Natural killer cell (primary cell): ENCODE measurements at regions of chr13 and their contacts with region 1.

Region 1: DNA sequence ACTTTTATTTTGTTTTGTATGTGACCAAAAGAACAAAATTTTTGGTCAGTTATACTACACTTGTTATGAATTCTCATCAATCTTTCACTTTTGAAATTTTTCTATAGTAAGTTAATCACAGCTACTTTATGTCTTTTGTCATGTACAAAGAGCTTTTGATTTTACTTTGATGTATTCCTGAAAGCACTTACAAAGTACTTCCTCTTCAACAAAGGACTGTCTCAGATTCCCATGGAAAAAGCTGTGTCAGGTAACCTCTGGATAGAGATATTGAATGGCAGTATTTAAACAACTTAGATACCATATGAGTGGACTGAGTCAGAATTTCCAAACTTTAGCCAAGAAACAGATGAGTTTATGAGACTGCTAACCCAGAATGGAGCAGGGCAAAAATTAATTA is 689.3 kb upstream of the ATXN8OS start:
- DNase-seq: no peak
- ATAC-seq: no peak
- H3K4me3 ChIP-seq: no peak overlapping the region
- H3K4me3 Mint-ChIP-seq: no peak overlapping the region
- H3K27ac ChIP-seq: no peak overlapping the region
- H3K27ac Mint-ChIP-seq: no peak overlapping the region
- H3K4me1 ChIP-seq: no peaks in the 10 kb centered on the region
- H3K4me1 Mint-ChIP-seq: no peaks in the 10 kb centered on the region
- H3K27me3 ChIP-seq: no peaks in the 10 kb centered on the region
- H3K27me3 Mint-ChIP-seq: no peaks in the 10 kb centered on the region
- CTCF ChIP-seq: no peak

Region 2: DNA sequence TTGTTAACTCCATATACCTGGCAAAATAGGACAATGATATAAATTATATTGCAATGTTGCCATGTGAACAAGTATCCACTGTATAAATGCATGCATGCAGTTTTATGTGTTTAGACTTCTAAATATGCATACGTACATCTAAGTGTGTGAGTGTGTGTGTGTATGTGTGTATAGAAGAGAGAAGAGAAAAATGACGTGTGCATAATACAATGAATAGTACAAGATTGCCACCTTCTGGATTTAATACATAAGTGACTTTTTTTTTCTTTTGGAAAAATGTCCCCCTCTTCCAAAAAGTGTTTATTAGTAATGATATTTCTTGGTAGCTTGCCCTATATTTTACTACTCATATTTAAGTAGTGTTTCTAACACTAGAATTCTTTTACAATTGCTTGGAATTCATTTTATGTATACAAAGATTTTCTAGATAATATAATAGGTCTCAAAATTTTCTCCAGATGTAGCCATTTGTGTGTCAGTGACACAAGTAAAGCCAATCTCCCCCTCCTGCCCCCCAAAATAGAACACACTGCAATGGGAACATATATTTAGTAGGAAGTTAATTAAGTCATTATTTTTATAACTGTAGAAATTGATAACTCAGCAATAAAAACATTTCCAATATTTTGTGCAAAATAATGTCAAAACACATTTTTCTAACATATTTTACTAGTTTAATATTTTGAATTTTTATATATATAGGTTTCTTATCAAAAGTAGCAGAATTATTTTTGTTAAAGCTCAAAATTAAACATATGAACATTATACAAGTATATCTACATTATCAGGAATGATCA is 94.0 kb before region 1 on chr13:
- intact Hi-C with region 1: no loop called
- DNase-seq: no peak
- ATAC-seq: no peak
- H3K4me3 ChIP-seq: no peak overlapping the region
- H3K4me3 Mint-ChIP-seq: no peak overlapping the region
- H3K27ac ChIP-seq: no peak overlapping the region
- H3K27ac Mint-ChIP-seq: no peak overlapping the region
- H3K4me1 ChIP-seq: no peaks in the 10 kb centered on the region
- H3K4me1 Mint-ChIP-seq: no peaks in the 10 kb centered on the region
- H3K27me3 ChIP-seq: no peaks in the 10 kb centered on the region
- H3K27me3 Mint-ChIP-seq: no peaks in the 10 kb centered on the region
- CTCF ChIP-seq: no peak

Region 3: GRCh38 chr13:69474011-69474685 is 55.8 kb after region 1 on chr13:
- intact Hi-C with region 1: loop called (anchors 10 kb)
- DNase-seq: no peak
- ATAC-seq: no peak
- H3K4me3 ChIP-seq: no peak overlapping the region
- H3K4me3 Mint-ChIP-seq: no peak overlapping the region
- H3K27ac ChIP-seq: no peak overlapping the region
- H3K27ac Mint-ChIP-seq: no peak overlapping the region
- H3K4me1 ChIP-seq: no peaks in the 10 kb centered on the region
- H3K4me1 Mint-ChIP-seq: no peaks in the 10 kb centered on the region
- H3K27me3 ChIP-seq: no peaks in the 10 kb centered on the region
- H3K27me3 Mint-ChIP-seq: no peaks in the 10 kb centered on the region
- CTCF ChIP-seq: no peak

Region 4: GRCh38 chr13:69999875-70000274 is 581.6 kb after region 1 on chr13:
- intact Hi-C with region 1: no loop called
- DNase-seq: no peak
- ATAC-seq: no peak
- H3K4me3 ChIP-seq: no peak overlapping the region
- H3K4me3 Mint-ChIP-seq: no peak overlapping the region
- H3K27ac ChIP-seq: no peak overlapping the region
- H3K27ac Mint-ChIP-seq: no peak overlapping the region
- H3K4me1 ChIP-seq: no peaks in the 10 kb centered on the region
- H3K4me1 Mint-ChIP-seq: no peaks in the 10 kb centered on the region
- H3K27me3 ChIP-seq: no peaks in the 10 kb centered on the region
- H3K27me3 Mint-ChIP-seq: no peaks in the 10 kb centered on the region
- CTCF ChIP-seq: no peak